ENCODE measurements at regions of chr1 and their contacts with region 1.

Region 1: GRCh38 chr1:84478876-84479868 is at the start of gene RPF1:
- DNase-seq: peak; percentile 74 to 91
- ATAC-seq: peak; percentile 95
- H3K4me3 ChIP-seq: peak within 1 kb of the TSS; percentile 67 to 90
- H3K27ac ChIP-seq: peak within 1 kb of the TSS; percentile 61 to 68
- H3K4me1 ChIP-seq: peaks cover 0 to 2% of the 10 kb centered on the region in 2 donors
- H3K27me3 ChIP-seq: no peaks in the 10 kb centered on the region
- total RNA-seq, gene RPF1: 18.6 to 25.1 TPM

Region 2: DNA sequence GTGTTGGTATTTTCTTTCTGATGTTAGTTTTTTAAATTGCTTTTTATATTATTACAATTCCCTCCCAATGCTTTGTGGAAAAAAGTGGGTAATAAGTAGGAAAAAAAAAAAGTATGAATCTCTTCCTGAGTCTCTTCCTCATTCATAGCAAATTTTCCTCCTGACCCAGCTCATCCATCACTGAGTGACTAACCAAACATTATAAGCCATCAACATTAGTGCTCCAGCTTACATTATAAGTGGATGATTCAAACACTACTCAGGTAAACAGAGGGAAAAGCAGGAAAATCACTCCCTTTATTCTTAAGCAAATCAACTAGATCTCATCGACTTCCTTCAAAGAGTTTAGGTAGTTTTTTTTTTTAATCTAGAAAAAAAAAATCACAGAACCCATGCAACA is 193.1 kb before region 1 on chr1:
- intact Hi-C with region 1: no loop called
- DNase-seq: no peak
- ATAC-seq: no peak
- H3K4me3 ChIP-seq: no peak overlapping the region
- H3K27ac ChIP-seq: no peak overlapping the region
- H3K4me1 ChIP-seq: peaks cover 0 to 2% of the 10 kb centered on the region in 2 donors
- H3K27me3 ChIP-seq: no peaks in the 10 kb centered on the region

Region 3: GRCh38 chr1:84311296-84311695 is 167.9 kb before region 1 on chr1:
- intact Hi-C with region 1: no loop called
- DNase-seq: no peak
- ATAC-seq: no peak
- H3K4me3 ChIP-seq: no peak overlapping the region
- H3K27ac ChIP-seq: no peak overlapping the region
- H3K4me1 ChIP-seq: no peaks in the 10 kb centered on the region
- H3K27me3 ChIP-seq: no peaks in the 10 kb centered on the region

Region 4: DNA sequence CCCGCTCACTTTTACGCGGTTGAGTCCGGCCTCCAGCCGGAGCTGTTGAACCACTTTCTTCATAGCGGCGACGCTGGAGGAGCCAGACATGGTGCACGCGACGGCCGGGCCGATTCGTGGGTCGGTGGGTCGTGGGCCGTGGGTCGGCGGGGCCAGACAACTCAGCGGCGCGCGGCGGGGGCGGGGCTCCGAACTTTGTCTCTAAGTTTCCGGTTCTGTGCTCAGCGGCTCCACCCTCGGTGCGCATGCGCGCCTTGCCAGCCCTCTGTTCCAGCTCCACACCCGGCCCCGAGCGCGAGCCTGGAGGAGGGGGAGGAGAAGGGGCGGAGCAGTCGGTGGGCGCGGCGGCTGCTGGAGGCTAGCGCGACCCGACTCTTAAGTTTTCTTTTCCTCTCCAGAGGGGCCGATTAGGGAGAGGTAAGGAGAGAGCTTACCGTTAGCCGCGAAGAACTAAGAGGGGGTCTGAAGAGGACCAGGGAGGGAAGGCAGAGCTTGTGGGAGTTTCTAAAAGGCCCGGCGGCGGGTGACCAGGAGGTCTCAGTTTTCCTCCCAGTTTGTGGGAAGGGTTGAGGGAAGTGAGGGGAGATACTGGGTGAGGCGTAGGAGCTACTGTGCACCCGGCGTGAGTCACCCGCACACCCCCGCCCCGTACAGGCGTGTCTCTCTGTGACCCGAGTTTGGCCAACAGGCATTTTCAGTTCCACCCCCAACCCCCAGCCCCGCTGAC is 27.0 kb after region 1 on chr1 and contains the starts of genes GNG5 and SPATA1:
- intact Hi-C with region 1: loop called in 1 of 2 experiments (anchors 2 kb)
- DNase-seq: peak; percentile 99 to 100
- ATAC-seq: peak; percentile 99
- H3K4me3 ChIP-seq: peak within 1 kb of the TSS; percentile 48 to 69
- H3K27ac ChIP-seq: peak within 1 kb of the TSS; percentile 5 to 85
- H3K4me1 ChIP-seq: peaks cover 1 to 10% of the 10 kb centered on the region in 2 donors
- H3K27me3 ChIP-seq: no peaks in the 10 kb centered on the region
- total RNA-seq, gene GNG5: 56.7 to 64.6 TPM
- total RNA-seq, gene SPATA1: 1.9 to 2.7 TPM